ENCODE measurements at regions of chr14 and their contacts with region 1.

Region 1: GRCh38 chr14:54347997-54348611 is 48.7 kb upstream of the CDKN3 start:
- DNase-seq: peak; percentile 63
- CTCF ChIP-seq: peak; percentile 64

Region 2: GRCh38 chr14:53432378-53432802 is 915.7 kb before region 1 on chr14:
- CTCF ChIA-PET with region 1: interaction called, 12 read pairs
- POLR2A ChIA-PET with region 1: no interaction called
- DNase-seq: peak; percentile 60
- CTCF ChIP-seq: peak; percentile 63

Region 3: GRCh38 chr14:53547593-53547992 is 800.5 kb before region 1 on chr14:
- CTCF ChIA-PET with region 1: interaction called, 13 read pairs
- POLR2A ChIA-PET with region 1: no interaction called
- DNase-seq: peak; percentile 24
- CTCF ChIP-seq: no peak

Region 4: DNA sequence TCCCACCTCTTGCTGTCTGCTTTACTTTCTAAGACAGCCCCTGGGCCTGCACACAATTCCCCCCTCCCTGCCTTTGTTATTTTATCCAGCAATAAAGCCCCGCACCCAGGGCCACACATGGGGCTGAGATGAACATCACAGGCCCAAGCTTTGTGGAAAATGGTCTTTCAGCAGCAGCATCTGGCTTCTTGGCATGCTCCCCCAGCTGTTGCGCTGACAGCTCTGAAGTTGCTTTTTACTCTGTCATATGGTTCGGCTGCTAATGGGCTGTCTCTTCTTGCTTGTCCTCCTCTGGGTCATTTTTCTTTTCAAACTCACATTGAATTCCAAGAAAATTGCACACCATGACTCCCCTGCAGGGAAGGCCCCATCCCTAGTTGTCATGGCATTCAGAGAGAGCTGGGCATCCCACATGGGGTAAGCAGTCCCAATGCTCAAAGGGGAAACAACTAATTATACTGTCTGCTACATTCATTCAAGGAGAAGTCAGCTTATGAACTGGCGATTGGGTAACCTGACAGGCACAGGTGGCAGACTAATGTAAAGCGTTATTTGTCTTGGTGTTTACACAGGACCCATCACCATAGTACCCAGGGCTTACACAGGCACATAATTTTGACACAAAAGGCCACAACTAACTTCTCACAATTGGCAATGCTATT is 25.3 kb before region 1 on chr14:
- CTCF ChIA-PET with region 1: interaction called, 16 read pairs
- POLR2A ChIA-PET with region 1: no interaction called
- DNase-seq: no peak
- CTCF ChIP-seq: no peak

Region 5: GRCh38 chr14:54366736-54367735 is 18.9 kb after region 1 on chr14:
- CTCF ChIA-PET with region 1: interaction called, 18 read pairs
- POLR2A ChIA-PET with region 1: no interaction called
- DNase-seq: peak; percentile 28
- CTCF ChIP-seq: peak; percentile 73